ENCODE measurements at regions of chr11 and their contacts with region 1.

Region 1: DNA sequence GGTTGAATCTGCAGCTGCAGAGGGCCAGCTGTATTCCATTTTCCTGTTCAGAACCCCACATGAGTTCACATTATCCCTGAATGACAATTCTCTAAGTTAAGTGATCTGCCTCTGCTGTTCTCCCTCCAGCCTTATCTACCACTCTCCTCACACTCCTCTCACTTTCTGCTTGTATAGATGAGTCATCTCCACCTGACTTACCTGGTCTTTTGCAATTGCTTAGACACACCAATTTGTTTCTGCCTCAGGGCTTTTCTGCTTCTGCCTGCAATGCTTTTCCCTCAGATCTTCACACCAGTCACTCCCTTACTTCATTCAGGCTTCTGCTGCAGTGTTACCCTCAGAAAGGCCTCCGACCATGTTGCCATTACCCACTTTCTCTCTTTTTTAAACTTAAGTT is 118.1 kb downstream of the ATM start:
- DNase-seq: peak; percentile 87 to 88
- H3K4me3 ChIP-seq: no peak overlapping the region
- H3K4me3 Mint-ChIP-seq: peak overlapping the region; percentile 4
- H3K27ac Mint-ChIP-seq: peak overlapping the region; percentile 1
- H3K4me1 ChIP-seq: peaks cover 19% of the 10 kb centered on the region
- H3K4me1 Mint-ChIP-seq: peaks cover 16% of the 10 kb centered on the region
- H3K27me3 ChIP-seq: no peaks in the 10 kb centered on the region
- H3K27me3 Mint-ChIP-seq: no peaks in the 10 kb centered on the region
- CTCF ChIP-seq: no peak

Region 2: DNA sequence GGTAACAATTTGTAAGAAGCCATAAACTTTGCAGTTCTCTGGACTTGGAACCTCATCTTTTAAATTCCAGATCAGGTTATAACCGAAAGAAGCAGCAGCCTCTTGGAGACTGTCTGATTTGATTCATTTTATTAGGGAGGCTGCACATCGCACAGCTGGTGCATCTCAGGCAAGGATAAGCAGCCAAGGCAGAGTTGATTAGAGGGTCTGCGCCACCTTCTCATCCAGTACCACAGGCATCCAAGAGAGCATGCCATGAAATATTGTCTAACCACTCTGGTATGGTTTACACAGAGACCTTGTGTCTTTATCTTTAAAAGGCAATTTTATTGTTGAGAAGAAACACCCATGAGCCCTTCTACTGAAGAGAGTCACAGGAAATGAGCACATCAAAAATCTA is 867.2 kb before region 1 on chr11:
- CTCF ChIA-PET with region 1: no interaction called
- POLR2A ChIA-PET with region 1: no interaction called
- intact Hi-C with region 1: no loop called
- DNase-seq: no peak
- H3K4me3 ChIP-seq: no peak overlapping the region
- H3K4me3 Mint-ChIP-seq: no peak overlapping the region
- H3K27ac Mint-ChIP-seq: no peak overlapping the region
- H3K4me1 ChIP-seq: 0 out of 2 replicates have a peak, but pooled peaks cover 4% of the 10 kb centered on the region
- H3K4me1 Mint-ChIP-seq: no peaks in the 10 kb centered on the region
- H3K27me3 ChIP-seq: no peaks in the 10 kb centered on the region; the same call in 1 of the 2 replicates
- H3K27me3 Mint-ChIP-seq: peaks cover 10% of the 10 kb centered on the region
- CTCF ChIP-seq: no peak

Region 3: GRCh38 chr11:108278546-108278945 is 62.4 kb before region 1 on chr11:
- CTCF ChIA-PET with region 1: no interaction called
- POLR2A ChIA-PET with region 1: no interaction called
- intact Hi-C with region 1: no loop called
- DNase-seq: no peak
- H3K4me3 ChIP-seq: no peak overlapping the region
- H3K4me3 Mint-ChIP-seq: no peak overlapping the region
- H3K27ac Mint-ChIP-seq: no peak overlapping the region
- H3K4me1 ChIP-seq: no peaks in the 10 kb centered on the region
- H3K4me1 Mint-ChIP-seq: no peaks in the 10 kb centered on the region
- H3K27me3 ChIP-seq: no peaks in the 10 kb centered on the region
- H3K27me3 Mint-ChIP-seq: no peaks in the 10 kb centered on the region
- CTCF ChIP-seq: no peak

Region 4: GRCh38 chr11:108307751-108308150 is 33.2 kb before region 1 on chr11:
- CTCF ChIA-PET with region 1: no interaction called
- POLR2A ChIA-PET with region 1: no interaction called
- intact Hi-C with region 1: no loop called
- DNase-seq: no peak
- H3K4me3 ChIP-seq: no peak overlapping the region
- H3K4me3 Mint-ChIP-seq: no peak overlapping the region
- H3K27ac Mint-ChIP-seq: no peak overlapping the region
- H3K4me1 ChIP-seq: no peaks in the 10 kb centered on the region
- H3K4me1 Mint-ChIP-seq: no peaks in the 10 kb centered on the region
- H3K27me3 ChIP-seq: no peaks in the 10 kb centered on the region
- H3K27me3 Mint-ChIP-seq: no peaks in the 10 kb centered on the region
- CTCF ChIP-seq: no peak

Region 5: DNA sequence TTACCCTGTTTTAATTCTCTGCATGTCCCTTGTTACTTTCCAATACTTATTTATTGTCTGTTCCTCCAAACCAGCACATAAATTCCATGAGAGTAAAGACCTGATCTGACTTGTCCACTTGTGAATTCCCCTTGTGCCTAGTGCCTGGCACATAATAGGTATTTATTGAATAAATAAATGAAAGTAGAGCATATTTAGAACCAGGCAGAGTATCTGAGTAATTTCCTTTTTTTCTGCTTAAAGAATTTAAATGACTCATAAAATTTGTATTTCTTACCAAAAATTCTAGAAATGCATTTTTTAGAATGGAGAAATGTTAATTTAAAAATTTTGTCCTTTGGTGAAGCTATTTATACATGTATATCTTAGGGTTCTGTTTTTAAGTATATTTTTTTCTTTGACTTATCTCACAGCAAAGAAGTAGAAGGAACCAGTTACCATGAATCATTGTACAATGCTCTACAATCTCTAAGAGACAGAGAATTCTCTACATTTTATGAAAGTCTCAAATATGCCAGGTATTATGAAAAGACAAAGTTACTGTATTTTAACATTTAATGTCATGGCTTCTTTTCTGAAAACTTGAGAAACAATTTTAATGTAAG is 21.3 kb before region 1 on chr11:
- CTCF ChIA-PET with region 1: no interaction called
- POLR2A ChIA-PET with region 1: no interaction called
- intact Hi-C with region 1: loop called (anchors 1 kb)
- DNase-seq: no peak
- H3K4me3 ChIP-seq: no peak overlapping the region
- H3K4me3 Mint-ChIP-seq: no peak overlapping the region
- H3K27ac Mint-ChIP-seq: no peak overlapping the region
- H3K4me1 ChIP-seq: peaks cover 10% of the 10 kb centered on the region
- H3K4me1 Mint-ChIP-seq: peaks cover 9% of the 10 kb centered on the region
- H3K27me3 ChIP-seq: no peaks in the 10 kb centered on the region
- H3K27me3 Mint-ChIP-seq: no peaks in the 10 kb centered on the region
- CTCF ChIP-seq: no peak

Region 6: DNA sequence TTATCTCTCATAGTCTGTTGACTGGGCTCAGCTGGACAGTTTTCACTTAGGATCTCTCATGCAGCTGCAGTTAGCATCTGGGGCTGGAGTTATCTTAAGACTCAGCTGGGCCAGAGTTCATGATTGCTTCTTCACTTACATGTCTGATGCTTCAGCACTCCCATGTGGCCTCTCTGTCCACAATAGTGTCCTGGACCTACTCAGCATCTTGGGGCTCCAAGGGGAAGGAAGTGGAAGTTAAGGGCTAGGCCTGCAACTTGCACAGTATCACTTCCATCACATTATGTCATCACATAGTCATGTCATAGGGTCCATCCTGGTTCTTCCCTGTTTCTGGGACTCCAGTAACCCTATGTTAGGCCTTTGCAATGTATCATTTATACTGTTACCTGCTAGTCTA is 10.5 kb after region 1 on chr11:
- CTCF ChIA-PET with region 1: no interaction called
- POLR2A ChIA-PET with region 1: no interaction called
- intact Hi-C with region 1: no loop called
- DNase-seq: no peak
- H3K4me3 ChIP-seq: no peak overlapping the region
- H3K4me3 Mint-ChIP-seq: no peak overlapping the region
- H3K27ac Mint-ChIP-seq: no peak overlapping the region
- H3K4me1 ChIP-seq: no peaks in the 10 kb centered on the region
- H3K4me1 Mint-ChIP-seq: no peaks in the 10 kb centered on the region
- H3K27me3 ChIP-seq: no peaks in the 10 kb centered on the region
- H3K27me3 Mint-ChIP-seq: no peaks in the 10 kb centered on the region
- CTCF ChIP-seq: no peak